Activated T-helper 1 cell treated with anti-CD3 and anti-CD28 coated beads, Interleukin-12 subunit alpha, Interleukin-12 subunit beta, Interleukin-2, Interleukin-4 antibody, amounts not matched to agents 30 ng/mL and 10 ng/mL and 1 ng/mL, durations not matched to agents 14 hours and 24 hours and 36 hours (primary cell): ENCODE measurements at regions of chr13 and their contacts with region 1.

Region 1: DNA sequence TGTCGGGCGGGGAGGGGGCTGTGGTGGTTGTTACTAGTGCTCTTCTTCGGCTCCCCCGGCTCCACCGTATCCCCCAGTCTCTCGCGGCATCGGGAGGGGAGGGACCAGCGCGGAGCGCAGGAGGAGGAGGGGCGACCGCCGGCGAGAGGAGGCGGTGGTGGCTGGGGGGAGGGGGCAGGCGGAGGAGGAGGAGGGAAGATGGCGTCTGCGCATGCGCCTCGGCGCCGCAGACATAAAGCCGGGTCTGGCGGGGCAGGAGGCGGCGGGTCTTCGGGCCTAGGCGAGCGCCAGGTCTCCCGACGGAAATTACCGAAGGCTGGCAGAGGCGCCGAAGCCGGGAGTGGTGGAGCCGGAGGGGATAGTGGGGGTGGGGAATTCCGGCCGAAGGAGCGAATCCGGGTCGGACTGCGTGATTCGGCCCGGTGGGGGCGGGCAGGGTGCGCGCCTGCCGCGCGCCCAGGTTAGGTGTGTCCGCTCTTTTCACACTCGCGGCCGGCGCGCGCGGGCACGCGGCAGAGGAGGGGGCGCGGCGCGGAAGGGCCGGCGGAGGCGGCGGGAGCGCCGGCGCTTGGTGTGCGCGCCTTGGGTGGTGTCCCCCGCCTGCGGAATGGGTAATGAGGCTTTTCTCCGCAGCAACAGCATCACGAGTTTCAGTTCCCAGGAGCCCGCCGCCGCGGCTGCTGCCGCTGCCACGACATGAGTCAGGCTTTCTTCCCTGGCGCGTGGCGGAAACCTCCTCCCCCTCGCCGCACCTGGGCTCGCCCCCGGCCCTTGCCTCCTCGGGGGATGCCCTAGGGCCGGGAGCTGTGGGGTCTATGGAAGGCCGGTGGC is 1.3 kb upstream of the TSC22D1 start:
- DNase-seq: peak; percentile 88
- H3K4me3 Mint-ChIP-seq: peak overlapping the region; percentile 92
- H3K27ac Mint-ChIP-seq: peak overlapping the region; percentile 86
- H3K4me1 Mint-ChIP-seq: peaks cover 36% of the 10 kb centered on the region
- H3K27me3 Mint-ChIP-seq: peaks cover 41% of the 10 kb centered on the region

Region 2: GRCh38 chr13:42991892-42992763 is 1585.3 kb before region 1 on chr13 and contains the start of gene EPSTI1:
- intact Hi-C with region 1: loop called (anchors 10 kb)
- DNase-seq: peak; percentile 80
- H3K4me3 Mint-ChIP-seq: peak within 1 kb of the TSS; percentile 95
- H3K27ac Mint-ChIP-seq: peak within 1 kb of the TSS; percentile 97
- H3K4me1 Mint-ChIP-seq: peaks cover 76% of the 10 kb centered on the region
- H3K27me3 Mint-ChIP-seq: no peaks in the 10 kb centered on the region
- total RNA-seq, gene EPSTI1: 18.6 and 19.3 TPM in 2 replicates

Region 3: GRCh38 chr13:44197791-44198770 is 379.4 kb before region 1 on chr13:
- intact Hi-C with region 1: loop called (anchors 1 kb)
- DNase-seq: peak; percentile 50
- H3K4me3 Mint-ChIP-seq: no peak overlapping the region
- H3K27ac Mint-ChIP-seq: peak overlapping the region; percentile 37
- H3K4me1 Mint-ChIP-seq: peaks cover 47% of the 10 kb centered on the region
- H3K27me3 Mint-ChIP-seq: peaks cover 32% of the 10 kb centered on the region

Region 4: GRCh38 chr13:44484562-44485138 is 92.8 kb before region 1 on chr13:
- intact Hi-C with region 1: loop called (anchors 1 kb)
- DNase-seq: no peak
- H3K4me3 Mint-ChIP-seq: peak overlapping the region; percentile 24
- H3K27ac Mint-ChIP-seq: no peak overlapping the region
- H3K4me1 Mint-ChIP-seq: peaks cover 17% of the 10 kb centered on the region
- H3K27me3 Mint-ChIP-seq: peaks cover 7% of the 10 kb centered on the region

Region 5: DNA sequence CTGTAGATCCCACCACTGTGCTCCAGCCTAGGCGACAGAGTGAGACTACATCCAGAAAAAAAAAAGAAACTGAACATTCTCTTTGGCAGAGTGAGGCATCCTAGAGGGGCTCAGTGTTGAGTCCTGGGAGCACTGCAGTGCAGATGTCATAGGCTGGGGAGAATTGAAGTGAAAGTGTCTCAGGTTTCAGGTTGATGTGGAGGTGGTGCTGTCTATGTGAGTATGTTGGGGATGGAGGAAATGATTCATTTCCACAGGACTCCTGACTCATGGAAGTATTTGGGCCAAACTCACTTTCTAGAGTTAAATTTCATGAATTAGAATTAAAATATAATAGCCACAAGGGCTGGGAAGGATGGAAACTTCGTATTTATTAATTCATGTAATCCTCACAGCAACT is 133.1 kb after region 1 on chr13:
- intact Hi-C with region 1: loop called (anchors 2 kb)
- DNase-seq: no peak
- H3K4me3 Mint-ChIP-seq: no peak overlapping the region
- H3K27ac Mint-ChIP-seq: no peak overlapping the region
- H3K4me1 Mint-ChIP-seq: peaks cover 18% of the 10 kb centered on the region
- H3K27me3 Mint-ChIP-seq: peaks cover 26% of the 10 kb centered on the region

Region 6: DNA sequence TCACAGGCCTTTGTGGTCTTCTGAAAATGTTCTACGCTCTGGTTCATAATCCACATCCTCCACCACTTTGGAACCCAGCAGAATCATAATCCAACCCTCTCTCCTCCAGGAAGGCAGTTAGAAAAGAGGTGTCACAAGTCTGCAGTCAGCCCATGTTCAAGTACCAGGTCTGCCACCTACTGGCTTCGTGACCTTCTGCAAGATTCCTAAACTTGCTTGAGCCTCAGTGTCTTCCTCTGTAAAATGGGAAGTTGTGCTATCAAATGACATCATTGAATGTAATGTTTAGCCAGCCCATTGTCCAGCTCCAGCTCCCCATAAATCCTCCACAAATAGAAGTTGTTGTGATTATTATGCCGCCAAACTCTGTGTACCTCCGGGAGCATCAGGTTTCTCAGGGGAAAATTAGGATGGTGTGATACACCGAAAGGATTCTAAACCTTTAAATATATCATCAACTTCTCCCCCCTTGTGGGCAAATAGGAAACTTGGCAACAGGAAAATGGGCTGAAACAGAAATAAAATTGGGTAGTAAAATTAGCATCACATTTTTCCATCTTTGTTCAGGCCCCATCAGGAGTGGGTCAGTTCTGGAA is 302.1 kb after region 1 on chr13:
- intact Hi-C with region 1: loop called (anchors 10 kb)
- DNase-seq: no peak
- H3K4me3 Mint-ChIP-seq: no peak overlapping the region
- H3K27ac Mint-ChIP-seq: no peak overlapping the region
- H3K4me1 Mint-ChIP-seq: peaks cover 11% of the 10 kb centered on the region
- H3K27me3 Mint-ChIP-seq: no peaks in the 10 kb centered on the region

Region 7: DNA sequence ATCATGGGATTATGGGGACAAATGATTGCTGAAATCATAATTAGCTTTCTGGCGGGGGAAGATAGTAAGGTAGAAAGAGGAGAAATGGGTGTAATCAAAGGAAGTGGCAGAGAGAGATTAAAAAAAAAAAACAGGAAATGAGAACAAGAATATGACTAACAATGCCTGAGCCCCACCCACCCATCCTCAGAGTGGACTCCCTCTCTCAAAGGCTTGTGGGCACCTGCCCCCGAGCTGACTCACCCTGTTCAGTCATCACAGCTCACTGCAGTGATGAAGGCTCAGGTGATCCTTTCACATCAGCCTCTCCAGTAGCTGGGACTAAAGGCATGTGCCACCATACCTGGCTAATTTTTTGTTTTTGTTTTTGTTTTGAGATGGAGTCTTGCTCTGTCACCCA is 789.9 kb after region 1 on chr13:
- intact Hi-C with region 1: loop called (anchors 1 kb)
- DNase-seq: peak; percentile 86
- H3K4me3 Mint-ChIP-seq: peak overlapping the region; percentile 64
- H3K27ac Mint-ChIP-seq: peak overlapping the region; percentile 91
- H3K4me1 Mint-ChIP-seq: peaks cover 55% of the 10 kb centered on the region
- H3K27me3 Mint-ChIP-seq: no peaks in the 10 kb centered on the region